Activated CD4-positive, alpha-beta memory T cell treated with anti-CD3 and anti-CD28 coated beads, Interleukin-2, amount 10 ng/mL, durations not matched to agents 7 days and 5 days (primary cell): ENCODE measurements at regions of chr20 and their contacts with region 1.

Region 1: DNA sequence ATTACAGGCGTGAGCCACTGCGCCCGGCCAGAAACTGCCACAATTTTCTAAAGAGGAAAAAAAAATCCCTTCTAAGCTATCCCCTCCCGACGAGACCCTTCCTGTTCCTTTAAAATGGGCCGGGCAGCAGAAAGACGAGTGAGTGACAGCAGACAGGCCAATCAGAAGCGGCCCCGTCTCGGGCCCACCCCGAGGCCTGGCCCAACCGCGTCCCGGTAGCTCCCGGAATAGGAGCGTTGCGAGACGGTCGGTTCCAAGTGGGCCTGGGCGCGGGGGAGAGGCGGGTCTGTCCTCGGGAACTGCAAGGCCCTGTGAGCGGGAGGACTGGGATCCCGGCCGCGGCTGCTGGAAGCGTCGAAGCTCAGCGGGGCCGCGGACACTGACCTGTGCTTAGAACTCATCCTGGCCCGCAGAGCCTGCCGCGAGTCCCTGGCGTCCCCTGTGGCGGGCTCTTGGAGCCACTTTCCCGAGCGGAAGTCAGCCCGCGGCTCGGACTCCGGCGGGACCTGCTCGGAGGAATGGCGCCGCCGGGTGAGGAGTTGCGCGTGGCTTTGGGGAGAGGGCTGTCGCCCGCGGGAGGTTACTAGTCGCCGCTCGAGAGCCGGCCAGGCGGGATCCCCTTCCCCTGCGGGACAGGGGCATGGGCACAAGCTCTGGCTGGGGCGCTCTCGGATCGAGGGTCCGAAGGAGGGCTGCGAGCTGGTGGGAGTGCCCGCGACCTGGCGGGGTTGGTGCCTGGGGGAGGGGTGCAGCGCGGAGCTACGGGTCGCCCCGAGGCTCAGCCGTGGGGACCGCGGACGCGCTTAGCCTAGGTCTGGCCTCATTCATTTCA is at the starts of genes MROH8 and RPN2:
- DNase-seq: peak; percentile 97
- H3K4me3 Mint-ChIP-seq: peak within 1 kb of the TSS; percentile 92
- H3K27ac Mint-ChIP-seq: peak within 1 kb of the TSS; percentile 94
- H3K4me1 Mint-ChIP-seq: peaks cover 37% of the 10 kb centered on the region
- H3K27me3 Mint-ChIP-seq: no peaks in the 10 kb centered on the region
- total RNA-seq, gene MROH8: 1.7 to 2.2 TPM
- total RNA-seq, gene RPN2: 168 to 179 TPM

Region 2: DNA sequence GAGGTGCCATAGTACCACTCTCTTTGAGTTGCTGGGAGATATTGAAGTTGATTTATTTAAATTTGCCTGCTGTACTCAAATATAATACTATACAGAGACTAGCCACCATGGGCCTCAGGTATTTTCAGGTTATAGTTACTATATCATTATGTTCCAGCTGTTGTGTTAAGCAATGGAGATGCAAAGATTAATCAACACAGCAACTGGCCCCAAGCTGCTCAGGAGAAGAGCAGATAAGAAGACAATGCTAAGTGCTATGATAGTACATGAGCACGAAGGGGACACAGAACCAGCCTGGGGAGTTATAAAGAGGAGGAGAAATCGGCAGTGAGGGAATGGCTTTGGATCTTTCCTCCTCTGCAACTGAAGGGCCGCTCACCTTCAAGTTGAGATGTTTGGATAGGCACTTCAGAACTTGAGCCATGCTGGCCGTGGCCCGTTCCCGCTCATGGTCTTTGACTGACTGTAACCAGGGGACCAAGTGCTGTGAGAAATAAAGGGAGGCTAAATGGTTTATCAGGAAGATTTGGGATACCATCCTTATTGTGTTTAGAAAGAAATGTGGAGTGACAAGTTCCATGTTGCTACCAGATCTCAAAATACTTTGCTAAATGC is 24.3 kb before region 1 on chr20:
- CTCF ChIA-PET with region 1: no interaction called
- POLR2A ChIA-PET with region 1: no interaction called
- DNase-seq: no peak
- H3K4me3 Mint-ChIP-seq: no peak overlapping the region
- H3K27ac Mint-ChIP-seq: no peak overlapping the region
- H3K4me1 Mint-ChIP-seq: no peaks in the 10 kb centered on the region
- H3K27me3 Mint-ChIP-seq: no peaks in the 10 kb centered on the region

Region 3: DNA sequence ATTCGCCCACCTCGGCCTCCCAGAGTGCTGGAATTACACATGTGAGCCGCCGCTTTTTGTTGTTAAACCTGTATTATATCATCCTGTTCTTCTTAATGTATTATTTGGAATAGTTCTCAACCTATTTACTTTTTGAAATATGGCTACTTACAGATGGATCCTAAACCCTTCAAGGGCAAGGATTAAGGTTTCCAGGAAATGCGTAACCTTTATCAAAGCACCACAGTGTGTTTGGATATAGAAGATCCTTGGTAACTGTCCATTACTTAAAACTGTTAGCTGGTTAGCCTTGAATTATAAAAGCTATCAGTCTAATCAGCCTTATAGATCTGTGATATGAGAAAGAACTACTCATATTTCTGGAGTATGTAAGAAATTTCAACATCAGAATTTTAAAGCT is 12.2 kb before region 1 on chr20:
- CTCF ChIA-PET with region 1: interaction called, 6 read pairs
- POLR2A ChIA-PET with region 1: interaction called, 15 read pairs
- DNase-seq: no peak
- H3K4me3 Mint-ChIP-seq: no peak overlapping the region
- H3K27ac Mint-ChIP-seq: no peak overlapping the region
- H3K4me1 Mint-ChIP-seq: no peaks in the 10 kb centered on the region
- H3K27me3 Mint-ChIP-seq: peaks cover 6% of the 10 kb centered on the region

Region 4: GRCh38 chr20:37501940-37502339 is 322.9 kb after region 1 on chr20:
- CTCF ChIA-PET with region 1: no interaction called
- POLR2A ChIA-PET with region 1: no interaction called
- DNase-seq: no peak
- H3K4me3 Mint-ChIP-seq: no peak overlapping the region
- H3K27ac Mint-ChIP-seq: no peak overlapping the region
- H3K4me1 Mint-ChIP-seq: no peaks in the 10 kb centered on the region
- H3K27me3 Mint-ChIP-seq: no peaks in the 10 kb centered on the region